ENCODE measurements at regions of chrX and their contacts with region 1.

Region 1: GRCh38 chrX:24426391-24426790 is 38.7 kb upstream of the PDK3 start:
- DNase-seq: no peak
- H3K4me3 ChIP-seq: no peak overlapping the region
- H3K27ac ChIP-seq: peak overlapping the region; percentile 71 to 79
- H3K4me1 ChIP-seq: peaks cover 0 to 18% of the 10 kb centered on the region in 2 donors
- H3K27me3 ChIP-seq: no peaks in the 10 kb centered on the region
- CTCF ChIP-seq: no peak

Region 2: GRCh38 chrX:23127586-23127985 is 1298.8 kb before region 1 on chrX:
- intact Hi-C with region 1: no loop called
- DNase-seq: no peak
- H3K4me3 ChIP-seq: no peak overlapping the region
- H3K27ac ChIP-seq: no peak overlapping the region
- H3K4me1 ChIP-seq: no peaks in the 10 kb centered on the region
- H3K27me3 ChIP-seq: no peaks in the 10 kb centered on the region
- CTCF ChIP-seq: no peak

Region 3: GRCh38 chrX:24464836-24465531 is 38.6 kb after region 1 on chrX and contains the start of gene PDK3:
- intact Hi-C with region 1: loop called (anchors 2 kb)
- DNase-seq: peak; percentile 66 to 94
- H3K4me3 ChIP-seq: peak within 1 kb of the TSS; percentile 66 to 91
- H3K27ac ChIP-seq: peak within 1 kb of the TSS; percentile 87 to 90
- H3K4me1 ChIP-seq: peaks cover 0 to 4% of the 10 kb centered on the region in 2 donors
- H3K27me3 ChIP-seq: no peaks in the 10 kb centered on the region
- CTCF ChIP-seq: no peak
- total RNA-seq, gene PDK3: 31.1 TPM

Region 4: GRCh38 chrX:24676403-24677024 is 250.1 kb after region 1 on chrX:
- intact Hi-C with region 1: no loop called
- DNase-seq: no peak
- H3K4me3 ChIP-seq: no peak overlapping the region
- H3K27ac ChIP-seq: no peak overlapping the region
- H3K4me1 ChIP-seq: no peaks in the 10 kb centered on the region
- H3K27me3 ChIP-seq: no peaks in the 10 kb centered on the region
- CTCF ChIP-seq: peak in 2 of 3 experiments; percentile 34 to 55